K562 (cell line): ENCODE measurements at regions of chr22 and their contacts with region 1.

Region 1: GRCh38 chr22:24951942-24952836 is at the start of gene KIAA1671:
- DNase-seq: peak; percentile 73 to 96 (median 94)
- ATAC-seq: peak; percentile 100
- H3K4me3 ChIP-seq: peak within 1 kb of the TSS; percentile 41
- H3K27ac ChIP-seq: no peak within 1 kb of the TSS
- H3K4me1 ChIP-seq: peaks cover 0 to 17% of the 10 kb centered on the region in 2 experiments; a peak in 3 of 5 replicates
- H3K27me3 ChIP-seq: peaks cover 0 to 30% of the 10 kb centered on the region in 2 experiments; a peak in 2 of 5 replicates
- CTCF ChIP-seq: peak; percentile 66 to 85 (median 80)
- EP300 ChIP-seq: no peak
- POLR2A ChIP-seq: no peak
- RAD21 ChIP-seq: peak; percentile 54 to 83
- polyA plus RNA-seq, gene KIAA1671: not detected

Region 2: GRCh38 chr22:24905909-24906308 is 46.3 kb before region 1 on chr22:
- CTCF ChIA-PET with region 1: no interaction called
- POLR2A ChIA-PET with region 1: no interaction called
- in situ Hi-C with region 1: no loop called
- intact Hi-C with region 1: no loop called
- DNase-seq: no peak
- ATAC-seq: no peak
- H3K4me3 ChIP-seq: no peak overlapping the region
- H3K27ac ChIP-seq: no peak overlapping the region
- H3K4me1 ChIP-seq: no peaks in the 10 kb centered on the region; a peak in 1 of 5 replicates
- H3K27me3 ChIP-seq: no peaks in the 10 kb centered on the region; a peak in 2 of 5 replicates
- CTCF ChIP-seq: no peak
- EP300 ChIP-seq: no peak
- POLR2A ChIP-seq: no peak
- RAD21 ChIP-seq: no peak

Region 3: GRCh38 chr22:25039754-25040153 is 87.6 kb after region 1 on chr22:
- CTCF ChIA-PET with region 1: no interaction called
- POLR2A ChIA-PET with region 1: interaction called, 4 read pairs
- in situ Hi-C with region 1: loop called (anchors 5 kb)
- intact Hi-C with region 1: no loop called
- DNase-seq: no peak
- ATAC-seq: no peak
- H3K4me3 ChIP-seq: no peak overlapping the region
- H3K27ac ChIP-seq: no peak overlapping the region
- H3K4me1 ChIP-seq: no peaks in the 10 kb centered on the region; a peak in 1 of 5 replicates
- H3K27me3 ChIP-seq: peaks cover 2 to 32% of the 10 kb centered on the region in 2 experiments; a peak in 3 of 5 replicates
- CTCF ChIP-seq: no peak
- EP300 ChIP-seq: no peak
- POLR2A ChIP-seq: no peak
- RAD21 ChIP-seq: no peak

Region 4: GRCh38 chr22:25048659-25049647 is 96.8 kb after region 1 on chr22:
- CTCF ChIA-PET with region 1: interaction called, 12 read pairs
- POLR2A ChIA-PET with region 1: no interaction called
- in situ Hi-C with region 1: loop called (anchors 5 kb)
- intact Hi-C with region 1: loop called (anchors 5 kb)
- DNase-seq: peak; percentile 60 to 68 (median 64)
- ATAC-seq: peak; percentile 84
- H3K4me3 ChIP-seq: no peak overlapping the region
- H3K27ac ChIP-seq: no peak overlapping the region
- H3K4me1 ChIP-seq: no peaks in the 10 kb centered on the region
- H3K27me3 ChIP-seq: no peaks in the 10 kb centered on the region; a peak in 2 of 5 replicates
- CTCF ChIP-seq: peak; percentile 65 to 71 (median 70)
- EP300 ChIP-seq: no peak
- POLR2A ChIP-seq: no peak
- RAD21 ChIP-seq: peak; percentile 38 to 76

Region 5: DNA sequence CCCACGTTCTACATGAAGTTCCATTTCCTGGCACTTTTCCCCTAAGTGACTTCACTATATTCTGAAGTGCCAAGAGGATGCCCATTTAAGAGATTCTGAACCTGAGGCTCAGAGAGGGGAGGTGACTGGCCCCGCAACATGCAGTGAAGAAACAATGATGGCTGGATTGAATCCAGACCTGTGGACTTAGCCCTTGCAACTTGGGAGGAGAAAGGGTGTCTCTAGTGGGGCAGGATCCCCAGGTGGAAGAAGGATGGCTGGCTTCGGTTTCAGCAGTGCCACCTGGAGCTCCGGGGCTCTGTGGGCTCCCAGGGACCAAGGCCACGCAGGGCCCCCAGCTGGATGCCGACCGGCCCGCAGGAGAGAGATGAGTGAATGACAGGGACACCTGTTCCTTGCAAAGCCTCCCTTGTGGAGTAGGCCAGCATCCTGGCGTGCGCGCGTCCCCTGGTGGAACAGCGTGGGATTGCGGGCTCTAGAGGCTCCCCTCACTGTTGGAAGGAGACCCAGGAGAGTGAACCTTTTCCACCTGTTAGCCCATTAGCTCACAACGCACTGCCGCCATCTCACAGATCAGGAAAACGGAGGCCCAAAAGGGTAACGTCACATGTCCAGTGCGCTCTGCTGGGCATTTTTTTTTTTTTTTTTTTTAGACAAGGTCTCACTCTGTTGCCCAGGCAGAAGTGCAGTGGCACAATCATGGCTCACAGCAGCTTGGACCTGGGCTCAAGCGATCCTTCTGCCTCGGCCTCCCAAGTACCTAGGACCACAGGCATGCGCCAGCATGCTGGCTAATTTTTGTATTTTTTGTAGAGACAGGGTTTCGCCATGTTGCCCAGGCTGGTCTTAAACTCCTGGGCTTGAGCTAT is 105.1 kb after region 1 on chr22:
- CTCF ChIA-PET with region 1: interaction called, 11 read pairs
- POLR2A ChIA-PET with region 1: no interaction called
- in situ Hi-C with region 1: no loop called
- intact Hi-C with region 1: no loop called
- DNase-seq: peak; percentile 52 to 60 (median 56)
- ATAC-seq: peak; percentile 95
- H3K4me3 ChIP-seq: no peak overlapping the region
- H3K27ac ChIP-seq: no peak overlapping the region
- H3K4me1 ChIP-seq: no peaks in the 10 kb centered on the region
- H3K27me3 ChIP-seq: peaks cover 0 to 6% of the 10 kb centered on the region in 2 experiments; a peak in 1 of 5 replicates
- CTCF ChIP-seq: peak; percentile 78 to 84 (median 84)
- EP300 ChIP-seq: no peak
- POLR2A ChIP-seq: no peak
- RAD21 ChIP-seq: peak; percentile 41 to 65